ENCODE measurements at regions of chr16 and their contacts with region 1.

Region 1: DNA sequence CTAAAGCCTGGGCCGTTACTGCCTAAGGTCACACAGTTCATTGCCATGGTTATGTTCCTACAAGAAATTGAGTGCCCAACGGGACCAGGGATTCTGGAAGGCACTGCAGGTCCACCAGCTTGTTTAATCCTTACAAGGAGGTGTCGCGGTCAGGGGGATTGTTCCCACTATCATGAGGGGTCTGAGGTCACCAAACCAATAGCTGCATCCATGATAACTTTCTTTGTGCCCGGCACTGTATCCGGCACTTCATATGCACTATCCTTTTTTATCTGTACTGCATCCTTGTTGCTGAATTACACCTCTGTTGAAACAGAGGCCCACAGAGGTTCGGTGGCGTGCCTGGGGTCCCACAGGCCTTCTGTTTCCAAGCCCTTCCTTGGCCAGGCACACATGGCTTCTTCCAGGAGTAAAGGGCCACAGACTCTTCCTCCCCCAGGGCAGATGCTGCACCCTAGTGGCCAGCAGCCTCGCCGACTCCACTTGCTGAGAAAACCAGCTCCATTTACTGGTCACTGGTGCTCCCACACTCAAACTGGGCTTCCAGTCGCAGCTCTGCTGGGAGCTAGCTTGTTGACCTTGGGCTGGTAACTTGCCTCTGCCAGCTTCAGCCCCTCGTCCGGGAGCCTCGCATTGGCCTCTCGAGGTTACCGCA is 82.0 kb upstream of the PLCG2 start:
- DNase-seq: peak; percentile 64
- ATAC-seq: peak; percentile 74
- H3K4me3 Mint-ChIP-seq: no peak overlapping the region
- H3K27ac Mint-ChIP-seq: peak overlapping the region; percentile 3
- H3K4me1 Mint-ChIP-seq: no peaks in the 10 kb centered on the region
- H3K27me3 Mint-ChIP-seq: no peaks in the 10 kb centered on the region
- CTCF ChIP-seq: peak; percentile 56

Region 2: GRCh38 chr16:81366316-81366932 is 330.7 kb before region 1 on chr16:
- CTCF ChIA-PET with region 1: interaction called, 10 read pairs
- POLR2A ChIA-PET with region 1: no interaction called
- intact Hi-C with region 1: no loop called
- DNase-seq: peak; percentile 10
- ATAC-seq: peak; percentile 67
- H3K4me3 Mint-ChIP-seq: no peak overlapping the region
- H3K27ac Mint-ChIP-seq: no peak overlapping the region
- H3K4me1 Mint-ChIP-seq: no peaks in the 10 kb centered on the region
- H3K27me3 Mint-ChIP-seq: no peaks in the 10 kb centered on the region
- CTCF ChIP-seq: peak; percentile 80

Region 3: DNA sequence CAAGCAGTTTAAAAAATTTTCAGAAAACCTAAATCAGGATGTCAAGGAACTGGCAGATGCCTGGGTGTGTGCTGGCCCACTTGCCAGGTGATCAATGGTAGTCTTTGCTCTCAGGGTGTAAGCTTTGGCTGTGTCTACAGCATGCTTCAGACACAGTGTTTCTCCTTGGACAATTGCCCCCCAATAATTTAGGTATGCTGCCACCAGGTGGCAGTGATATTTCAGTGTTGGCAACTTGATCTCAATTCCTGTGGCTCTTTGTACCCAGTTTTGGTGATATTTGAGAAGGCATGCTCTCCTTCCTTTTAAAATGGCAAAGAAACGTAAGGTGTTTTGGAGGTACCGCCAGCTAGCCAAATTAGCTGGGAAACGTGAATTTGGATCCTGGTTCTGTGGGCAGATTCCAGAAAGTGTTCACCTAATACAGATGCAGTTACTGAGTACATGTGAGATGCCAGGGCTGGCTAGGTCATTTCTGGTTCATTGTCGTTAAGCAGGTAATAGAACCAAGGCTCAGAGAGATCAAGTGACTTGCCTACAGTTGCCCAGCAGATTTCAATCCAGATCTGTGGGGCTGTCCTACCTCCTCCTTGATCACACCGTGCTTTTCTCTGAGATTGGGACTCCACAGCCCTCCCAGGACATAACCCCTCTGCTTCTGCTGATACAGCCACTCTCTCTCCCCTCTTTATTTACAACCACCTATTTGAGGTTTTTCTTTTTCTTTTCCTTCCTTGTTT is 73.6 kb before region 1 on chr16:
- CTCF ChIA-PET with region 1: interaction called, 37 read pairs
- POLR2A ChIA-PET with region 1: no interaction called
- intact Hi-C with region 1: no loop called
- DNase-seq: peak; percentile 74
- ATAC-seq: no peak
- H3K4me3 Mint-ChIP-seq: no peak overlapping the region
- H3K27ac Mint-ChIP-seq: no peak overlapping the region
- H3K4me1 Mint-ChIP-seq: peaks cover 5% of the 10 kb centered on the region
- H3K27me3 Mint-ChIP-seq: no peaks in the 10 kb centered on the region
- CTCF ChIP-seq: peak; percentile 69

Region 4: DNA sequence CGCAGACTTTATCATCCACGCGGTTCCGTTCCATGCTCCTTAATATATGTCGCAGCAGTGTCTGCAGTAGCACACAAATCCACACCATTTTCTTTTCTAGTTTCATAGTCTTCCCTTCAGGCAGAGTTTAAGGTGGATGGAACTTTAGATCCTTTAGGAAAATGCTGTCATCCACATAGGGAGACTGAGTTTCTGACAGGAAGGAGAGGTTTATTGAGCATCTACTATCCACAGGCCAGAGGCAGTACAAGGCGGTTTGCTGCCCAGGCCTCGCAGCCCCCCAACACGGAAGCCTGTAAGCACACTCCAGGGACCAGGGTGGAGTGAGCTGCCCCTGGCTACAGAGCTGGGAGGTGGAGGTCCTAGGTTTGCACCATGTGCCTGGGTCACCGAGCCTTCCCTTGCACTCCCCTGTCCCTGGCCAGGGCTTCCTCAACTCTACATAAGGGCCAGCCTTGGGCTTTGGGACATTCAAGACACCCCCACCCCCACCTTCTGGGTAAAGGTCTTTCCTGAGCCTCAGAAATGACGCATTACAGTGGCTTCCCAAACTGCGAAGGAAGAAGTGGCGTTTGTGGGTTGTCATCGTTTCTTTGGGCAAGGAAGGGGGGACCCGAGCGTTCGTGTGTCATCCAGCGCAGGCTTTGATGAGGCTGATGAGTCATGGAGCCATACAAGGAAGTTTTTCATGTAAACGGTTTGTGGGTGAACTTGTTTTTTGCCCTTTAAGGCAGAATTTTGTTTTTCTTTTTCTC is 64.5 kb before region 1 on chr16:
- CTCF ChIA-PET with region 1: interaction called, 11 read pairs
- POLR2A ChIA-PET with region 1: interaction called, 3 read pairs
- intact Hi-C with region 1: no loop called
- DNase-seq: peak; percentile 94
- ATAC-seq: peak; percentile 83
- H3K4me3 Mint-ChIP-seq: peak overlapping the region; percentile 57
- H3K27ac Mint-ChIP-seq: peak overlapping the region; percentile 96
- H3K4me1 Mint-ChIP-seq: peaks cover 69% of the 10 kb centered on the region
- H3K27me3 Mint-ChIP-seq: no peaks in the 10 kb centered on the region
- CTCF ChIP-seq: no peak

Region 5: DNA sequence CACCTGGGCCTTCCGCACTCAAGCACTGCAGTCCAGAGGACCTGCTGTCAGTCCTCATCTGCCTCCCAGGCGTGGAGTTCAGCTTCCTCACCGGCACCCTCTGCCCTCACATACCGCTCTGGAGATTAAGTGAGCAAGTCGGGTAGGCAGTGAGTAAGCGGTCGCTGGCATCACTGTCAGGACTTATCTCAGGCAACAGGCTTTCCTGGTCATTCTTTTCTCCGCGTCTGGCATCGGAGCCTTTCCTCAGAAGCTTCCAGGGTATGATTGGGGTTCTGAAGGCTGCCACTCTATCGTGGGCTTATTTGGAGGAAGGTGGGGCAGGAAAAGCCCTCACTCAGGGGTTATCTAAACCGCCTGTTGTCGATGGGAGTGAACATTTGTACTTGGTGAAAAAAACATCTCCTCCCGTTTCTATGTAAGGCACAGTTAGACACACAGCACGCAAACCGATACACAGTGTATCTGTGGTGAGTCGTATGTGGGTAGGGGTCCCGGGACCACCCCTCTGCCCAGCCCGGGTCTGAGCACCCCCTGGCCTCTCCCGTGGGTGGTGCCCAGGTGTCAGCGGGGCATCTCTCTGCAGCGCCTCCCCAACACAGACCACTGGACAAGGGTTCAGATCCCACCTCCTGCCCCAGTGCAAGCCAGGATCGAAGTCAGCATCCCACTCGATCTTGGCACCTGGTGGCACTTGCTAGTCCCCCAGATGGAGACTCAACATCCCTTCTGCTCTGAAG is 10.5 kb before region 1 on chr16:
- CTCF ChIA-PET with region 1: no interaction called
- POLR2A ChIA-PET with region 1: no interaction called
- intact Hi-C with region 1: no loop called
- DNase-seq: no peak
- ATAC-seq: no peak
- H3K4me3 Mint-ChIP-seq: no peak overlapping the region
- H3K27ac Mint-ChIP-seq: no peak overlapping the region
- H3K4me1 Mint-ChIP-seq: peaks cover 12% of the 10 kb centered on the region
- H3K27me3 Mint-ChIP-seq: no peaks in the 10 kb centered on the region
- CTCF ChIP-seq: no peak

Region 6: DNA sequence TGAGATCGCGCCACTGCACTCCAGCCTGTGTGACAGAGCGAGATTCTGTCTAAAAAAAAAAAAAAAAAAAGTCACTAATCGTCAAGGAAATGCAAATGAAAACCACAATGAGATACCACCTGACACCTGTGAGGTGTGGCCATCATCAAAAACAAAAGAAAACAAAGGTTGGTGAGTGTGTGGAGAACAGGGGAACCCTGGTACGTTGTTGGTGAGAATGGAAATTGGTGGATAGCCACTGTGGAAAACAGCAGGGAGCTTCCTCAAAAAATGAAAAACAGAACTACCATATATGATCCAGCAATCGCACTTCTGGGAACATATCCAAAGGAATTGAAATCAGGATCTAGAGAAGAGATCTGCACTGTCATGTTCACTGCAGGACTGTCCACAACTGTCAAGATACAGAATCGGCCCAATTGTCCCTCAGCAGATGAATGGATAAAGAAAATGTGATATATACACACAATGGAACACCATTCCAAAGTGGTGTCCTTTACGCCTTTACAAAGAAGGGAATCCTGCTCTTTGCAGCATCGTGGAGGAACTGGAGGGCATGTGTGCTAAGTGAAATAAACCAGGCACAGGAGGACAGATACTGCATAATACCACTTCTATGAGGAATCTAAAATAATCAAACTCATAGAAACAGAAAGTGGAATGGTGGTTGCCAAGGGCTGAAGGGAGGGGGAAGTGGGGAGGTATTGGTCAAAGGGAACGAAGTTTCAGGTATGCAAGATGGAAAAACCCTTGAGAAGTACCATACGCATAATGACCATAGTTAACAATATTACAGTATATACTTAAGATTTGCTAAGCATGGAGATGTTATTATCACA is 18.5 kb after region 1 on chr16:
- CTCF ChIA-PET with region 1: interaction called, 13 read pairs
- POLR2A ChIA-PET with region 1: no interaction called
- intact Hi-C with region 1: no loop called
- DNase-seq: peak; percentile 51
- ATAC-seq: peak; percentile 35
- H3K4me3 Mint-ChIP-seq: peak overlapping the region; percentile 10
- H3K27ac Mint-ChIP-seq: peak overlapping the region; percentile 65
- H3K4me1 Mint-ChIP-seq: peaks cover 43% of the 10 kb centered on the region
- H3K27me3 Mint-ChIP-seq: no peaks in the 10 kb centered on the region
- CTCF ChIP-seq: no peak